Naive thymus-derived CD4-positive, alpha-beta T cell (primary cell): ENCODE measurements at regions of chr12 and their contacts with region 1.

Region 1: DNA sequence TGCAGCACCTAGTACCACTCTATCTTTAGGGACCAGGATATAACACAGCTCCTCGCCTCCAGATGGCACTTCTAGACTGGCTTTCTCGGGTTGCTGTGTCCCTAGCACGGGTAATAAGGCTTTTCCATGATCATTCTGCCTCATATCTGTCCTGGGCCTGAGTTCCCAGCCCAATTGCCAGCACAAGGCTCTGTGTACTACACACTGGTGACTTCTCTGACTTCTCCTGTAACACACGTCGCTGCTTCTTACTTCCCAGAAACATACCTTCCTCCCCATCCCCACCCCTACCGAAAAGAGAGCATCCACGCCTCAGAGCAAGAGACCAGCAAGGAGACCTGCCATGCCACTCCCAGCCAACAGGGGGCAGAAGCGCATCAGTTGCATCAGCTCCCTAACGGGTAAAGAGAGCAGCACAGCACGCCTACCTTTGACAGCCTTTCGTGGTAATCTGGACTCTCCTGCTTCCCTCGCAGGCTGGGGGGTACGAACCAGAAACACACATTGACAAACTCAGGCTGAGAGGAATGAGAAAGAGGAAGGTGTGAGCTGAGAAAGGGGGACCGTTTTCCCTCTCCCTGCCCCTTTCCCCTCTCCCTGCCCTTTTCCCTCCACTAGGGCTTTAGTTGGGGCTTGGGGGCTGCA is 21.2 kb upstream of the ZNF740 start:
- DNase-seq: peak; percentile 72 to 91 (median 85)
- ATAC-seq: peak; percentile 100
- H3K4me3 ChIP-seq: no peak overlapping the region
- H3K4me3 Mint-ChIP-seq: peak overlapping the region in 1 of 10 donors; percentile 24
- H3K27ac ChIP-seq: no peak overlapping the region
- H3K27ac Mint-ChIP-seq: peak overlapping the region in 6 of 9 donors; percentile 26 to 66 (median 52)
- H3K4me1 ChIP-seq: peaks cover 5 to 7% of the 10 kb centered on the region in 2 donors
- H3K4me1 Mint-ChIP-seq: peaks cover 4 to 12% (median 7%) of the 10 kb centered on the region in 7 donors
- H3K27me3 ChIP-seq: no peaks in the 10 kb centered on the region
- H3K27me3 Mint-ChIP-seq: no peaks in the 10 kb centered on the region

Region 2: DNA sequence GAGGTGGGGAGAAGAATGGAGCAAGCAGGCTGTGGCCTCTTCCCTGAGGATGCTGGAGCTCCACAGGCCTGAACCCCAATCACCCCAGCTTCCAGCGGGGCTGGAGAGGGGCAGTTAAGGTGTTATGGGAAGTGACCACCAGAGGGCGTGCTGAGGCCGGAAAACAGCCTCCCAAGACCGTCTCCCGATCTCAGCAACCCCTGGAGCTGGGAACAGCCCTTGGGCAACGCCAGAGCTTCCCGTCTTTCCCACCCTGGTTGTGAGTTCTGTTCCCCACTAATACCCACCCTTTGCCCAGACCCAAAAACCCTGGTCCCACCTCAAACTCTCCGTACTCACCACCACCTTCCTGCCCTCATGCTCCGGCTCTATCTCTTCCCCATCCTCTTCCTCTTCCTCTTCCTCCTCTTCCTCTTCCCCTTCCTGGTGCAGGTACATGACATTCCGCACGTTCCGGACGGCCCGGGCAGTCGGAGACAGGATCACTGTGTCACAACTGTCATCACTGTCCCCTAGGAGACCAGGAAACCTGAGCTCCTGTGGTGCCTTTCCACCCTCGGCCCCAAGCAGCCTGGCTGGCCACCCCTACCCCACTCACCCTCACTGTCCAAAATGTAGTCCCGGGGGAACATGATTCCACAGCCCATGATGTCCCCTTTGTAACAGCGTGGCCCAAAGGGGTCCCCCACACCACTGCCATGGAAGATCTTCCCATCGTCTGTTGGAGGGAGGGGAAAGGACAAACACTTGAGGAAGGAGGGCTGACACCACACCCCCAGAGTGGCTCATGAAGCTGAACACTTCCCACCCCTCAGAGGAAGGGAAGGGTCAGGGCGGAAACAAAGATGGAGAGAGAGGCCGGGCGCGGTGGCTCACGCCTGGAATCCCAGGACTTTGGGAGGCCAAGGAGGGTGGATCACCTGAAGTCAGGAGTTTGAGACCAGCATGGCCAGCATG is 93.1 kb before region 1 on chr12:
- CTCF ChIA-PET with region 1: interaction called, 6 read pairs
- POLR2A ChIA-PET with region 1: no interaction called
- intact Hi-C with region 1: loop called in 1 of 2 experiments (anchors 1 kb)
- DNase-seq: peak; percentile 36 to 72 (median 51)
- ATAC-seq: peak; percentile 80
- H3K4me3 ChIP-seq: no peak overlapping the region
- H3K4me3 Mint-ChIP-seq: no peak overlapping the region
- H3K27ac ChIP-seq: no peak overlapping the region
- H3K27ac Mint-ChIP-seq: peak overlapping the region in 4 of 9 donors; percentile 26 to 74 (median 50)
- H3K4me1 ChIP-seq: peaks cover 0 to 3% of the 10 kb centered on the region in 2 donors
- H3K4me1 Mint-ChIP-seq: peaks cover 0 to 21% (median 11%) of the 10 kb centered on the region in 7 donors
- H3K27me3 ChIP-seq: no peaks in the 10 kb centered on the region
- H3K27me3 Mint-ChIP-seq: no peaks in the 10 kb centered on the region

Region 3: GRCh38 chr12:53200458-53201176 is 41.3 kb after region 1 on chr12:
- CTCF ChIA-PET with region 1: interaction called, 50 read pairs
- POLR2A ChIA-PET with region 1: no interaction called
- intact Hi-C with region 1: loop called in 1 of 2 experiments (anchors 1 kb)
- DNase-seq: peak in 4 of 9 donors; percentile 41 to 46 (median 42)
- ATAC-seq: peak; percentile 29
- H3K4me3 ChIP-seq: peak overlapping the region; percentile 21
- H3K4me3 Mint-ChIP-seq: peak overlapping the region; percentile 65 to 90 (median 76)
- H3K27ac ChIP-seq: peak overlapping the region; percentile 75
- H3K27ac Mint-ChIP-seq: peak overlapping the region; percentile 82 to 95 (median 92)
- H3K4me1 ChIP-seq: peaks cover 70 to 94% of the 10 kb centered on the region in 2 donors
- H3K4me1 Mint-ChIP-seq: peaks cover 56 to 91% (median 74%) of the 10 kb centered on the region in 7 donors
- H3K27me3 ChIP-seq: no peaks in the 10 kb centered on the region
- H3K27me3 Mint-ChIP-seq: no peaks in the 10 kb centered on the region

Region 4: GRCh38 chr12:53213348-53213747 is 54.0 kb after region 1 on chr12:
- CTCF ChIA-PET with region 1: interaction called, 11 read pairs
- POLR2A ChIA-PET with region 1: interaction called, 7 read pairs
- intact Hi-C with region 1: loop called (anchors 1 kb)
- DNase-seq: peak; percentile 71 to 85 (median 80)
- ATAC-seq: peak; percentile 84
- H3K4me3 ChIP-seq: no peak overlapping the region
- H3K4me3 Mint-ChIP-seq: peak overlapping the region in 2 of 10 donors; percentile 5 to 21
- H3K27ac ChIP-seq: peak overlapping the region; percentile 27
- H3K27ac Mint-ChIP-seq: peak overlapping the region in 8 of 9 donors; percentile 24 to 92 (median 74)
- H3K4me1 ChIP-seq: peaks cover 35 to 44% of the 10 kb centered on the region in 2 donors
- H3K4me1 Mint-ChIP-seq: peaks cover 54 to 93% (median 74%) of the 10 kb centered on the region in 7 donors
- H3K27me3 ChIP-seq: no peaks in the 10 kb centered on the region
- H3K27me3 Mint-ChIP-seq: no peaks in the 10 kb centered on the region

Region 5: GRCh38 chr12:53267999-53268647 is 108.8 kb after region 1 on chr12 and contains the start of gene ESPL1:
- CTCF ChIA-PET with region 1: interaction called, 11 read pairs
- POLR2A ChIA-PET with region 1: no interaction called
- intact Hi-C with region 1: loop called in 1 of 2 experiments (anchors 1 kb)
- DNase-seq: peak; percentile 67 to 91 (median 81)
- ATAC-seq: peak; percentile 93
- H3K4me3 ChIP-seq: peak within 1 kb of the TSS; percentile 80
- H3K4me3 Mint-ChIP-seq: peak within 1 kb of the TSS; percentile 95 to 99 (median 96)
- H3K27ac ChIP-seq: peak within 1 kb of the TSS; percentile 83
- H3K27ac Mint-ChIP-seq: peak within 1 kb of the TSS; percentile 44 to 98 (median 88)
- H3K4me1 ChIP-seq: peaks cover 9 to 11% of the 10 kb centered on the region in 2 donors
- H3K4me1 Mint-ChIP-seq: peaks cover 10 to 54% (median 20%) of the 10 kb centered on the region in 7 donors
- H3K27me3 ChIP-seq: no peaks in the 10 kb centered on the region
- H3K27me3 Mint-ChIP-seq: no peaks in the 10 kb centered on the region
- total RNA-seq, gene ESPL1: 0.08 to 65.4 (median 1.1) TPM

Region 6: DNA sequence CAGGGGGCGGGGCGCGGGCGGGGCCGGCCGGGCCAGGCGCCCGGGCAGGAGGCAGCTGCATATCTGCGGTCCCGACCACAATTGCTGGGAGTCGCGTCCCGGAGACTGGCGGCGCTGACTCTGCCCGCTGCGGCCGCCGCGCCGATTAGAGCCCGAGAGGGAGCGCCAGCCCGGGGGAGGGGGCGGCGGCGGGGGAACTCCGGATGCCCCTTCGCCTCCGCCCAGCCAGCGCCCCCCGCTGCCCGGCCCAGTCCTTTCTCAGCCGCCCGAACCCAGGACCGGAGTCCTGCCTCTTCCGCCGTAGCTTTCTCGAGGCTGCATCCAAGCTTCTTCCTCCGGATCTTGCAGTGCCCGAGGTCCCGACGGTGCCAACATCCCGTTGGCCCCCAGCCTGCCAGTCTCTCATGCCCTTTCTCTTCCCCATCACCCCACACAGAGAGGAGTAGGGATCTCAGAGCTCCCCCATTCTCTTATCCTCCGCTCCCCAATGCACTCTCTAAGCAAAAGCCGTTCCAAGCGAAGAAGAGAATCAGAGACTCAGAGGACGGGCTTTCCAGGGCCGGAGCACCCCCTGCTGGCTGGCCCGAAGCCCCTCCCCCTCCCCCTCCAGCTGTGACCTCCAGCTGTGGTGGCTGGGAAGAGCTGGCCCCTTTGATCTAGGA is 185.6 kb after region 1 on chr12:
- CTCF ChIA-PET with region 1: interaction called, 3 read pairs
- POLR2A ChIA-PET with region 1: interaction called, 3 read pairs
- intact Hi-C with region 1: loop called (anchors 1 kb)
- DNase-seq: peak; percentile 42 to 68 (median 63)
- ATAC-seq: peak; percentile 89
- H3K4me3 ChIP-seq: peak overlapping the region; percentile 79
- H3K4me3 Mint-ChIP-seq: peak overlapping the region; percentile 91 to 100 (median 97)
- H3K27ac ChIP-seq: peak overlapping the region; percentile 66
- H3K27ac Mint-ChIP-seq: peak overlapping the region; percentile 87 to 96 (median 91)
- H3K4me1 ChIP-seq: peaks cover 0 to 10% of the 10 kb centered on the region in 2 donors
- H3K4me1 Mint-ChIP-seq: peaks cover 11 to 25% (median 17%) of the 10 kb centered on the region in 7 donors
- H3K27me3 ChIP-seq: no peaks in the 10 kb centered on the region
- H3K27me3 Mint-ChIP-seq: peaks cover 0 to 13% (median 0%) of the 10 kb centered on the region in 5 donors